ENCODE measurements at regions of chr5 and their contacts with region 1.

Region 1: DNA sequence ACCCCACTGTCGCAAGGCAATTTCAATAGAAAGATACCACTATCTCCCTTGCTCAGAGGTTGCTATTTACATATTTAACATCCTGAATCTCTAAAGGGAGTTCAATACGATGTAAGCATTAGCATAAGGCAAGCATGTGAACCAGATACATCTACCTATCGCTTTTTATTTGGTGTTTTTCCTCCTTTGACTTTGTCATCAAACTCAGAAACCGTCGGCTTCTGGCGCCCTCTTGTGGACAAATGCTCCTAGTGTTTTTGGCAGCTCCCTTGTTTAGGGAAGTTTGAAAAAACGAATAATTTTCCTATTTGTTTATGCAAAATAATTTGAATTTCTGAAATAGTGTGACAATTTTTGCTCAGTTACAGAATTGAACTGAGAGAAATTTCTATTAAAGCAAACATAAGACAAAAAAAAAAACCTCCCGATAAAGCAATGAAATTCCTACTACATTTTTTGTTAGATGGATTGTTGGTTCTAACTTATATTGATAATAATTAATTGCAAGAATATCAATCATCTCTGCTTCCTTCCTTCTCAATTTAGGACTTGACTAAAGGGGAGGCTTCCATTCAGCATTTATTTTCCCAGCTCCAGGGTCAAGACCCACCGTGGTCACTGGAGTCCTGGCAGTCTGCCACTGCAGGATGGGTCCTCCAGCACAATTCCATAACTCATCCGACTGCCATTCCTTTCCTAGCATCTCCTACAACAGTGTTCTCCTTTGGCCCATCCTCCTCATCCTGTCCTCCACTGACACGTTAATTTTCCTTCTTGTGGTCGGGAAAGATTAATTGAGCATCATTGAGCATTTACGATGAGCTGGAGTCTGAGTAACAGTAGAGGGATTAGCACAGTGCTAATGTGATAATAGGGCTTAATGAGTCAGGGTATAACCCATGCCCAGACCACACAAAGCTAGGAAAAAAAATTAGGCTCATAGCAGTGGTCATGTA is 131.8 kb upstream of the CHD1 start:
- DNase-seq: peak; percentile 89
- ATAC-seq: peak; percentile 66
- H3K4me3 ChIP-seq: peak overlapping the region in 3 of 5 experiments; percentile 18 to 47 (median 25)
- H3K4me3 Mint-ChIP-seq: peak overlapping the region; percentile 74
- H3K27ac ChIP-seq: peak overlapping the region; percentile 22 to 56
- H3K27ac Mint-ChIP-seq: peak overlapping the region; percentile 73
- H3K4me1 ChIP-seq: peaks cover 24 to 41% of the 10 kb centered on the region in 2 donors
- H3K4me1 Mint-ChIP-seq: peaks cover 40% of the 10 kb centered on the region
- H3K27me3 ChIP-seq: no peaks in the 10 kb centered on the region
- H3K27me3 Mint-ChIP-seq: no peaks in the 10 kb centered on the region
- CTCF ChIP-seq: peak; percentile 89

Region 2: GRCh38 chr5:97231025-97231636 is 1829.5 kb before region 1 on chr5:
- CTCF ChIA-PET with region 1: interaction called, 4 read pairs
- POLR2A ChIA-PET with region 1: no interaction called
- intact Hi-C with region 1: loop called (anchors 5 kb)
- DNase-seq: peak; percentile 59
- ATAC-seq: no peak
- H3K4me3 ChIP-seq: no peak overlapping the region
- H3K4me3 Mint-ChIP-seq: no peak overlapping the region
- H3K27ac ChIP-seq: no peak overlapping the region
- H3K27ac Mint-ChIP-seq: no peak overlapping the region
- H3K4me1 ChIP-seq: no peaks in the 10 kb centered on the region
- H3K4me1 Mint-ChIP-seq: peaks cover 2% of the 10 kb centered on the region
- H3K27me3 ChIP-seq: no peaks in the 10 kb centered on the region
- H3K27me3 Mint-ChIP-seq: peaks cover 4% of the 10 kb centered on the region
- CTCF ChIP-seq: peak; percentile 86

Region 3: GRCh38 chr5:98905857-98906690 is 154.5 kb before region 1 on chr5:
- CTCF ChIA-PET with region 1: interaction called, 90 read pairs
- POLR2A ChIA-PET with region 1: no interaction called
- intact Hi-C with region 1: loop called (anchors 1 kb)
- DNase-seq: peak; percentile 72
- ATAC-seq: peak; percentile 36
- H3K4me3 ChIP-seq: no peak overlapping the region
- H3K4me3 Mint-ChIP-seq: no peak overlapping the region
- H3K27ac ChIP-seq: no peak overlapping the region
- H3K27ac Mint-ChIP-seq: no peak overlapping the region
- H3K4me1 ChIP-seq: peaks cover 5 to 12% of the 10 kb centered on the region in 2 donors
- H3K4me1 Mint-ChIP-seq: peaks cover 31% of the 10 kb centered on the region
- H3K27me3 ChIP-seq: no peaks in the 10 kb centered on the region
- H3K27me3 Mint-ChIP-seq: no peaks in the 10 kb centered on the region
- CTCF ChIP-seq: peak; percentile 92

Region 4: GRCh38 chr5:99004960-99005359 is 55.6 kb before region 1 on chr5:
- CTCF ChIA-PET with region 1: interaction called, 12 read pairs
- POLR2A ChIA-PET with region 1: interaction called, 6 read pairs
- intact Hi-C with region 1: loop called (anchors 2 kb)
- DNase-seq: peak; percentile 86
- ATAC-seq: peak; percentile 99
- H3K4me3 ChIP-seq: no peak overlapping the region
- H3K4me3 Mint-ChIP-seq: peak overlapping the region; percentile 42
- H3K27ac ChIP-seq: no peak overlapping the region
- H3K27ac Mint-ChIP-seq: peak overlapping the region; percentile 80
- H3K4me1 ChIP-seq: peaks cover 15 to 22% of the 10 kb centered on the region in 2 donors
- H3K4me1 Mint-ChIP-seq: peaks cover 29% of the 10 kb centered on the region
- H3K27me3 ChIP-seq: no peaks in the 10 kb centered on the region
- H3K27me3 Mint-ChIP-seq: no peaks in the 10 kb centered on the region
- CTCF ChIP-seq: no peak

Region 5: DNA sequence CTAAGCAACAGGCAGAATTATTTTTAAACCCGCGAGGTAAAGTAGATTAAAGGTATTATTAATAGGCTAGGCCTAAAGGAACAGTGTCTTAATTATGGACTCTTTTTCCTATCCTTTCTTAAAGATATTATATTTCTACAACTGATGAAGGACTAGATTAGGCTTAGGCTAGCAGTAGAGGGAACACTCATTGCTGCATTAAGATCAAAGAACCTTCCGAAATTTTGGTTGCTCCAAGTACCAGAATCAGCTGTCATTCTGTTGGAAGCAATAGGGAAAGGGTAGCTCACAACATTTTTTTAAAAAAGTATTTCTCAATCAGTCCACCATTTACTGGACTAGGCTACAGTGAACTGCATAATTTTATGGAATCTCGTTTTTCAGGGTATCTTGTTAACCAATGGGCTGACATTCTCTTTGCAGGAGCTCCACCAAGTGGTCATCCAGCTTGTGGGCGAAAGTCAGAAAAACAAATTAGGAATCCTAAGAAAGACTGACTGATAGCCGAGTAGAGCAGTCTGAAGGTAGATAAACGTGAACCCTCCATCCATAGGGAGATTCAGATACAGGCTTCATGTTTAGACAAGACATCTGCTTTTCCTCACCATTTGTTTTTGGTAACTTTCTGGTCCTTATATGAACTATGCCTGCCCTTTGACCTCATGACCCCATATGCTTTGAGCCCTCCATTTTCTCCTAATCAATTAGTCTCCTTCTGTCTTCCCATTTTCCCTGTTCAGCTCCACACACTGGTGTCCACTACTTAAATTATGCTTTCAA is 28.2 kb before region 1 on chr5:
- CTCF ChIA-PET with region 1: interaction called, 33 read pairs
- POLR2A ChIA-PET with region 1: interaction called, 6 read pairs
- intact Hi-C with region 1: loop called (anchors 1 kb)
- DNase-seq: peak; percentile 73
- ATAC-seq: peak; percentile 56
- H3K4me3 ChIP-seq: peak overlapping the region in 2 of 5 experiments; percentile 38 to 60
- H3K4me3 Mint-ChIP-seq: peak overlapping the region; percentile 92
- H3K27ac ChIP-seq: peak overlapping the region; percentile 60 to 82
- H3K27ac Mint-ChIP-seq: peak overlapping the region; percentile 93
- H3K4me1 ChIP-seq: peaks cover 52 to 54% of the 10 kb centered on the region in 2 donors
- H3K4me1 Mint-ChIP-seq: peaks cover 80% of the 10 kb centered on the region
- H3K27me3 ChIP-seq: no peaks in the 10 kb centered on the region
- H3K27me3 Mint-ChIP-seq: no peaks in the 10 kb centered on the region
- CTCF ChIP-seq: peak; percentile 42

Region 6: GRCh38 chr5:99275128-99275527 is 214.5 kb after region 1 on chr5:
- CTCF ChIA-PET with region 1: no interaction called
- POLR2A ChIA-PET with region 1: no interaction called
- intact Hi-C with region 1: no loop called
- DNase-seq: no peak
- ATAC-seq: no peak
- H3K4me3 ChIP-seq: no peak overlapping the region
- H3K4me3 Mint-ChIP-seq: no peak overlapping the region
- H3K27ac ChIP-seq: no peak overlapping the region
- H3K27ac Mint-ChIP-seq: no peak overlapping the region
- H3K4me1 ChIP-seq: no peaks in the 10 kb centered on the region
- H3K4me1 Mint-ChIP-seq: no peaks in the 10 kb centered on the region
- H3K27me3 ChIP-seq: no peaks in the 10 kb centered on the region
- H3K27me3 Mint-ChIP-seq: no peaks in the 10 kb centered on the region
- CTCF ChIP-seq: no peak

Measured in B cell (primary cell).